ENCODE measurements at regions of chr12 and their contacts with region 1.

Region 1: DNA sequence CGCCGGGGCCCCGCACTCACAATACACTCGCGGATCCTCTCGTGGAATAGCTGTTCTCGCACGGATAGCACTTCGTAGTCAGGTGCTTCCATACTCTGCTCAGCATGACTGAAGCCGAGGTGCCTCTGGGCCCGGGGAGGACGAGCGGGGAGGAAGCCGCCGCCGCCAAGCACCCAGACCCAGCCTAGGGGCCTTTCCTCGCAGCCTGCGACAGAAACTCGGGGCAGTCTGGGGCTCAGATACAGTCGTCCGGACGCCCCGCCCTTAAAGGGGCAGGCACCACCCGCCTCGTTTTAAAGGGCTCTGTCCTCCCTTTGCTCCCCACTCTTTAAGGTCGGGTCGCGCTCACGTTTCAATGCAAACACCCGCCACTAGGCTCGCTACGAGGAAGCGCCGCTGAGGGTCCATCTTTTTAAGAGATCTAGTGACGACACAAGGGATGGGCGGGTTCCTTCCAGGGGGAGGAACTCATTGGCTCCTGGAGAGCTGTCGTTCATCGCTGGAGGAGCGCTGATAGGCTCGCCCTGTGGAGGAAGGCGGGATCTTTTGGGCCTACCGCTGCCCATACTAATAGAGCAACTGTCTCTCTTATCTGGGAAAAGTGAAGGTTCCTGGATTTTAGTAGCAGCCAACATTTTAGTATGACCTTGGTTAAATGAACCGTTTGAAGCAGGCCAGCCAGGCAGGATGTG is at the start of gene LMBR1L:
- DNase-seq: peak; percentile 76 to 98 (median 96)
- ATAC-seq: peak; percentile 96
- H3K4me3 ChIP-seq: peak within 1 kb of the TSS; percentile 76
- H3K4me3 Mint-ChIP-seq: peak within 1 kb of the TSS; percentile 95 to 100 (median 98)
- H3K27ac ChIP-seq: peak within 1 kb of the TSS; percentile 95
- H3K27ac Mint-ChIP-seq: peak within 1 kb of the TSS; percentile 96 to 99 (median 99)
- H3K4me1 ChIP-seq: peaks cover 14 to 19% of the 10 kb centered on the region in 2 donors
- H3K4me1 Mint-ChIP-seq: peaks cover 14 to 48% (median 44%) of the 10 kb centered on the region in 7 donors
- H3K27me3 ChIP-seq: no peaks in the 10 kb centered on the region
- H3K27me3 Mint-ChIP-seq: no peaks in the 10 kb centered on the region
- total RNA-seq, gene LMBR1L: 67.4 to 328 (median 263) TPM

Region 2: GRCh38 chr12:48311313-48311712 is 799.3 kb before region 1 on chr12:
- CTCF ChIA-PET with region 1: no interaction called
- POLR2A ChIA-PET with region 1: no interaction called
- intact Hi-C with region 1: no loop called
- DNase-seq: no peak
- ATAC-seq: no peak
- H3K4me3 ChIP-seq: no peak overlapping the region
- H3K4me3 Mint-ChIP-seq: no peak overlapping the region
- H3K27ac ChIP-seq: no peak overlapping the region
- H3K27ac Mint-ChIP-seq: no peak overlapping the region
- H3K4me1 ChIP-seq: no peaks in the 10 kb centered on the region
- H3K4me1 Mint-ChIP-seq: peaks cover 0 to 6% (median 4%) of the 10 kb centered on the region in 7 donors
- H3K27me3 ChIP-seq: no peaks in the 10 kb centered on the region
- H3K27me3 Mint-ChIP-seq: peaks cover 0 to 3% (median 0%) of the 10 kb centered on the region in 5 donors

Region 3: DNA sequence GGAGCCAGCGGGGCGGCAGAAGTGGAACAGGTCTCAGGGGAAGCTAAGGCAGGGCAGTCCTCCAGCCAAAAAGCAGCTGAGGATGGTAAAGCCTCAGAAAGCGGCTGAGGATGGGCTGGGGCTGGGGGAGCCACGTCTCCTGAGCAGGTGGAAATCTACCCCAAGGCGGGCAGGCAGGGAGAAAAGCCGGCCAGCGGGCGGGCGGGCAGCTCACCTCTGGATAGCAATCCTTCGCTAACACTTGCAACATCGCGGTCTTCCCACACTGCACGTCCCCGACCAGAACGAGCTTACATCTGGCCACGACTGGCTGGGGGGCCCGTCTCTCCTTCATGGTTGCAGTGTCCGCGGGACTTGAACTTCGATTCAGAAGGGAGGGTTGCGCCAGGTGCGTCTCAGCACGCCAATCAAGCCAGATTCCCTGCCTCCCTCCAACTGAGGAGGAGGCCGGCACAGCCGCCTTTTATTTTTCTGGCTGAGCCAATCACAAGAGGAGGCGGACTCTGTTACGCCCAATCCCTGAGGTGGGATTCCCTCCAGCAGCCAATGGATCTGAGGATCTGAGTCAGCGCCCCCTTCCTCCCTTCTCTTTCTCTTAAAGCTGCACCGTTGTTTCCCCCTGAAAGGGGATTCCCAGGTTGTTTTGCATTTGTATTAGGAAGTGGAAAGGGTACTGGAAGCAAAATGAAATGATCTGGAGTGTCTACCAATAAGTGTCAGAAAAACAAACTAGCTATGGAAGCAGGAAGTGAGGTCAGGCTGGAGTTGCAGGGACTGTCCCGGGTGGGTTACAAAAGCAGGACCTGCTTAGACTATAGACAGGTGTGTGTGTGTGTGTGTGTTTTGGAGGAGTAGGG is 244.9 kb before region 1 on chr12 and contains the start of gene RND1:
- CTCF ChIA-PET with region 1: no interaction called
- POLR2A ChIA-PET with region 1: no interaction called
- intact Hi-C with region 1: loop called in 1 of 2 experiments (anchors 5 kb)
- DNase-seq: peak; percentile 50 to 92 (median 82)
- ATAC-seq: peak; percentile 96
- H3K4me3 ChIP-seq: peak within 1 kb of the TSS; percentile 69
- H3K4me3 Mint-ChIP-seq: peak within 1 kb of the TSS; percentile 87 to 95 (median 94)
- H3K27ac ChIP-seq: peak within 1 kb of the TSS; percentile 62
- H3K27ac Mint-ChIP-seq: peak within 1 kb of the TSS; percentile 66 to 96 (median 85)
- H3K4me1 ChIP-seq: peaks cover 10 to 11% of the 10 kb centered on the region in 2 donors
- H3K4me1 Mint-ChIP-seq: peaks cover 15 to 28% (median 25%) of the 10 kb centered on the region in 7 donors
- H3K27me3 ChIP-seq: no peaks in the 10 kb centered on the region
- H3K27me3 Mint-ChIP-seq: peaks cover 23 to 40% (median 28%) of the 10 kb centered on the region in 5 donors
- total RNA-seq, gene RND1: 1.1 to 13.5 (median 2.3) TPM

Region 4: GRCh38 chr12:49069507-49070346 is 40.9 kb before region 1 on chr12 and contains the start of gene RHEBL1:
- CTCF ChIA-PET with region 1: interaction called, 5 read pairs
- POLR2A ChIA-PET with region 1: interaction called, 3 read pairs
- intact Hi-C with region 1: loop called in 1 of 2 experiments (anchors 1 kb)
- DNase-seq: peak; percentile 93 to 99 (median 96)
- ATAC-seq: peak; percentile 100
- H3K4me3 ChIP-seq: peak within 1 kb of the TSS; percentile 99
- H3K4me3 Mint-ChIP-seq: peak within 1 kb of the TSS; percentile 86 to 99 (median 96)
- H3K27ac ChIP-seq: peak within 1 kb of the TSS; percentile 74
- H3K27ac Mint-ChIP-seq: peak within 1 kb of the TSS; percentile 77 to 92 (median 86)
- H3K4me1 ChIP-seq: peaks cover 5 to 13% of the 10 kb centered on the region in 2 donors
- H3K4me1 Mint-ChIP-seq: peaks cover 14 to 31% (median 18%) of the 10 kb centered on the region in 7 donors
- H3K27me3 ChIP-seq: no peaks in the 10 kb centered on the region
- H3K27me3 Mint-ChIP-seq: no peaks in the 10 kb centered on the region
- total RNA-seq, gene RHEBL1: 1.8 to 9.4 (median 3.3) TPM

Region 5: DNA sequence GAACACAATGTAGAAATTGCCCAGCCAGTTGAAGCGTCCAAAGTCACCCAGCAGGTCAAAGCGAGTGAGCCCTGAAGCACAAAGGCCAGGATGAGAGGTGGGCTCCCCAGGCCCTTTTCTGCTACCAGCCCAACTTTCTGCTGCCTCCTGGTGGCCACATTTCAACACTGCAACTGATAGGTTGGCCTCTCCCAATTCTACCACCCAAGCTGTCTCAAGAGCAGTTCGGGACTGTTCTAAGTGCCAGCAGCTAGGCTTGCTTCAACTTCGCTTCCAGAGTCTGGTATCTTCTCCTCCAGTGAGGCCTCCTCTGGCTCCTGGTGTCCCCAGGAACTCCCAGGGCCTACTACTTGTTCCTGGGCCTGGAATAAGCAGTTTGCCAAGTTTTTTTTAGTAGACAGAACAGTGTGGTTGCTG is 12.6 kb before region 1 on chr12:
- CTCF ChIA-PET with region 1: interaction called, 16 read pairs
- POLR2A ChIA-PET with region 1: interaction called, 41 read pairs
- intact Hi-C with region 1: loop called in 1 of 2 experiments (anchors 1 kb)
- DNase-seq: peak; percentile 38 to 65 (median 58)
- ATAC-seq: peak; percentile 78
- H3K4me3 ChIP-seq: no peak overlapping the region
- H3K4me3 Mint-ChIP-seq: no peak overlapping the region
- H3K27ac ChIP-seq: no peak overlapping the region
- H3K27ac Mint-ChIP-seq: peak overlapping the region in 2 of 9 donors; percentile 23 to 51
- H3K4me1 ChIP-seq: peaks cover 9 to 10% of the 10 kb centered on the region in 2 donors
- H3K4me1 Mint-ChIP-seq: peaks cover 0 to 22% (median 16%) of the 10 kb centered on the region in 7 donors
- H3K27me3 ChIP-seq: peaks cover 4 to 6% of the 10 kb centered on the region in 2 donors
- H3K27me3 Mint-ChIP-seq: peaks cover 14 to 23% (median 21%) of the 10 kb centered on the region in 5 donors

Region 6: GRCh38 chr12:49264738-49265515 is 154.3 kb after region 1 on chr12 and contains the start of gene TUBA1C:
- CTCF ChIA-PET with region 1: no interaction called
- POLR2A ChIA-PET with region 1: no interaction called
- intact Hi-C with region 1: loop called in 1 of 2 experiments (anchors 1 kb)
- DNase-seq: peak; percentile 67 to 98 (median 72)
- ATAC-seq: peak; percentile 93
- H3K4me3 ChIP-seq: peak within 1 kb of the TSS; percentile 91
- H3K4me3 Mint-ChIP-seq: peak within 1 kb of the TSS; percentile 88 to 99 (median 92)
- H3K27ac ChIP-seq: peak within 1 kb of the TSS; percentile 68
- H3K27ac Mint-ChIP-seq: peak within 1 kb of the TSS; percentile 65 to 99 (median 89)
- H3K4me1 ChIP-seq: peaks cover 16% of the 10 kb centered on the region in 2 donors
- H3K4me1 Mint-ChIP-seq: peaks cover 4 to 51% (median 11%) of the 10 kb centered on the region in 7 donors
- H3K27me3 ChIP-seq: no peaks in the 10 kb centered on the region
- H3K27me3 Mint-ChIP-seq: peaks cover 0 to 2% (median 0%) of the 10 kb centered on the region in 5 donors
- total RNA-seq, gene TUBA1C: 17.9 to 195 (median 24.1) TPM

Measured in naive thymus-derived CD4-positive, alpha-beta T cell (primary cell).